Esophagus squamous epithelium (tissue), 5 donors: ENCODE measurements at regions of chr12 and their contacts with region 1.

Region 1: DNA sequence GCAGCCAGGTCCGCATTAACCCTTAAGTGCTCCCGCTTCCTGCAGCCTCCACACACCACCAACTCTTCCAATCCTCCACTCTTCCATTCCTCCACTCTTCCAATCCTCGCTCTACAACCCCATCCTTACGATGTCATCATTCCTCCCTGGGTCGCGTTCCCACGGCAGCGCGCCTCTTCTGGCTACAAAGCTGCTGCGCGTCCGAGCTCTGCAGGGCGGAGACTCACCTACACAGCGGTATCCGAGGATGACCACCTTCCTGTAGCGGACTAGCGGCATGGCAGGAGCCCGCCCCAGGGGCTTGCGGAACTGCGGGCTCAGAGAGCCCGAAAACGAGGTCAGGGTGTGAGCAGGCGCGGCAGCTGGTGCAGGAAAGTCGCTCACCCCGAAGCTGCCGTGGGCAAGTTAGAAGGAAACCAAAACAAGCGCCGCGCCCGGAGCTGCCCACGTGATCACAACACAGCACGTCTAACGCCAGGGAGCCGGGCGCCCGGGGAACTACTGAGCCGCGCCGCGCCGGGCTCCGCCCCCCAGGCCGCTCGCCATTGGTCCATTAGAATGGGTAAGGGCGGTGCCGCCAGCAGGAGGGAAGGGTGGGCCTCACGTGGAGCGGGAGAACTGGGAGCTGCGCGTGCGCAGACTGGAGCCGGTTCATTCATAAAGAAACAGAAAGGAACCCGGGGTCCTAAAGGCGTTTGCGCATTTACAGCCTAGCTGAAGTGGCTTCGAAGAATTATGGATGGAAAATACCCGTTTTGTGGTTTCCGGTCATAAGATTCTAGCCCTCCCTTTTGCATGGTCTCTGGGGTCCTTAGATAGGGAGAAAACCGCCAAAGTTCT is at the start of gene RHEBL1:
- DNase-seq: peak; percentile 94
- H3K4me3 ChIP-seq: peak within 1 kb of the TSS; percentile 64 to 86 (median 73)
- H3K27ac ChIP-seq: peak within 1 kb of the TSS; percentile 71 to 90 (median 82)
- H3K4me1 ChIP-seq: peaks cover 8 to 20% (median 12%) of the 10 kb centered on the region in 3 donors
- H3K27me3 ChIP-seq: no peaks in the 10 kb centered on the region
- CTCF ChIP-seq: peak in 1 of 6 experiments; percentile 50
- POLR2A ChIP-seq: peak in 2 of 4 donors; percentile 30 to 64
- total RNA-seq, gene RHEBL1: 0.23 to 0.44 TPM in 2 of 4 donors, not detected in the others

Region 2: GRCh38 chr12:49121047-49121696 is 51.4 kb after region 1 on chr12:
- intact Hi-C with region 1: loop called (anchors 10 kb)
- DNase-seq: no peak
- H3K4me3 ChIP-seq: no peak overlapping the region
- H3K27ac ChIP-seq: no peak overlapping the region
- H3K4me1 ChIP-seq: no peaks in the 10 kb centered on the region
- H3K27me3 ChIP-seq: no peaks in the 10 kb centered on the region
- CTCF ChIP-seq: peak in 5 of 6 experiments; percentile 43 to 62 (median 49)
- POLR2A ChIP-seq: no peak

Region 3: DNA sequence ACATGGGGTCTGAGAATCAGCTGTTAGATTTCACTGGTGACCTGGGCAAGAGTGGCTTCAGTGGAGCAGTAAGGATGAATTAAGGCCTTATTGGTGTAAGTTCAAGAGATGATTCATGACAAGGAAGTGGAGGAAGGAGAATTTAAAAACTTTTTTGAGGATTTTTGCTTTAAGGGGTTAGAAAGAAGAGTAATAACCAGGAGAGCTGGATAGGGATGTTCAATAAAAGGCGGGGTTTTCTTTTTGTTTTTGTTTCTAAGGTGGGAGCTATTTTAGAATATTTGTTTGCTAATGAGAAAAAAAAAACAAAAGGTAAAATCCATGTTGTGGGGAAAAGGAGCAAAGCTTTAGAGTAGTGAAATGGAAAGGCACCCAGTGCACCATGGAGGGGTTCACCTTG is 76.7 kb after region 1 on chr12:
- intact Hi-C with region 1: no loop called
- DNase-seq: no peak
- H3K4me3 ChIP-seq: no peak overlapping the region
- H3K27ac ChIP-seq: no peak overlapping the region
- H3K4me1 ChIP-seq: no peaks in the 10 kb centered on the region
- H3K27me3 ChIP-seq: no peaks in the 10 kb centered on the region
- CTCF ChIP-seq: no peak
- POLR2A ChIP-seq: no peak